Calu3 (cell line): ENCODE measurements at regions of chr11 and their contacts with region 1.

Region 1: GRCh38 chr11:57345555-57346211 is 7.5 kb downstream of the P2RX3 start:
- DNase-seq: peak; percentile 79
- H3K4me3 Mint-ChIP-seq: no peak overlapping the region
- H3K27ac Mint-ChIP-seq: no peak overlapping the region
- H3K4me1 Mint-ChIP-seq: no peaks in the 10 kb centered on the region
- H3K27me3 Mint-ChIP-seq: peaks cover 28% of the 10 kb centered on the region
- CTCF ChIP-seq: peak; percentile 74

Region 2: DNA sequence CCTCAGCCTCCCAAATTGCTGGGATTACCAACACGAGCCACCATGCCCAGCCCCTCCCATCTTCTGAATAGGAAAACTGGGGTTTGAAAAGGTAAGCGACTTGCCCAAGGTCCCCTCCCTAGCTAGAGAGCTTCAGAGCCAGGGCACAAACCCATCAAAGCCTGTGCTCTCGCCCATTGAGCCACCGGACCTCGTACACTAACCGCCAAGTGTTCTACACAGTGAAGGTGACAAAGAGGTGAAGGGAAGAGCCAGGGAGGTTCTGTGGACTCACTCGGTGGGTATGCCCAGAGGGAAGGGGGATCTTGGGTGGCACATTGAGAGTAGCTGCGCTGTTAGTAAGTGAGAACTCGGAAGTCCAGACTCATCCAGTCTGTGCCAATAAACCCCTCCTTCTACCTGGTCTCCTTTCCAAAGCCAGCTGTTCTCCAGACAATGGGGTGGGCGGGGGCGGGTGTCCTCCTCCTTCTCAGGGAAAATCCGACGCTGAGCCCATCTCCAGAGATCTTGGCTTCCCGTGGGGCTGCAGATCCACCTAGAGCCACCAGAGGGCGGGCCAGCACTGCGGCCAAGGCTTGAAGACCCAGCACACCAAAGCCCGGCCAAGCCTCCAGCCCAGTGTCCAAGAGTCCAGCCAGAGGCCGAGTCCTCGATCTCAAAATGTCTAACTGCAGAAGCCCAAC is 111.4 kb after region 1 on chr11:
- CTCF ChIA-PET with region 1: interaction called, 8 read pairs
- intact Hi-C with region 1: loop called (anchors 5 kb)
- DNase-seq: peak; percentile 88
- H3K4me3 Mint-ChIP-seq: peak overlapping the region; percentile 9
- H3K27ac Mint-ChIP-seq: no peak overlapping the region
- H3K4me1 Mint-ChIP-seq: peaks cover 43% of the 10 kb centered on the region
- H3K27me3 Mint-ChIP-seq: peaks cover 42% of the 10 kb centered on the region
- CTCF ChIP-seq: peak; percentile 96

Region 3: GRCh38 chr11:57480409-57481137 is 134.9 kb after region 1 on chr11:
- CTCF ChIA-PET with region 1: interaction called, 8 read pairs
- intact Hi-C with region 1: loop called (anchors 2 kb)
- DNase-seq: peak; percentile 79
- H3K4me3 Mint-ChIP-seq: no peak overlapping the region
- H3K27ac Mint-ChIP-seq: no peak overlapping the region
- H3K4me1 Mint-ChIP-seq: peaks cover 17% of the 10 kb centered on the region
- H3K27me3 Mint-ChIP-seq: peaks cover 14% of the 10 kb centered on the region
- CTCF ChIP-seq: peak; percentile 68

Region 4: GRCh38 chr11:57493507-57494503 is 148.1 kb after region 1 on chr11:
- CTCF ChIA-PET with region 1: interaction called, 10 read pairs
- intact Hi-C with region 1: no loop called
- DNase-seq: peak; percentile 82
- H3K4me3 Mint-ChIP-seq: no peak overlapping the region
- H3K27ac Mint-ChIP-seq: peak overlapping the region; percentile 95
- H3K4me1 Mint-ChIP-seq: peaks cover 35% of the 10 kb centered on the region
- H3K27me3 Mint-ChIP-seq: no peaks in the 10 kb centered on the region
- CTCF ChIP-seq: peak; percentile 94

Region 5: DNA sequence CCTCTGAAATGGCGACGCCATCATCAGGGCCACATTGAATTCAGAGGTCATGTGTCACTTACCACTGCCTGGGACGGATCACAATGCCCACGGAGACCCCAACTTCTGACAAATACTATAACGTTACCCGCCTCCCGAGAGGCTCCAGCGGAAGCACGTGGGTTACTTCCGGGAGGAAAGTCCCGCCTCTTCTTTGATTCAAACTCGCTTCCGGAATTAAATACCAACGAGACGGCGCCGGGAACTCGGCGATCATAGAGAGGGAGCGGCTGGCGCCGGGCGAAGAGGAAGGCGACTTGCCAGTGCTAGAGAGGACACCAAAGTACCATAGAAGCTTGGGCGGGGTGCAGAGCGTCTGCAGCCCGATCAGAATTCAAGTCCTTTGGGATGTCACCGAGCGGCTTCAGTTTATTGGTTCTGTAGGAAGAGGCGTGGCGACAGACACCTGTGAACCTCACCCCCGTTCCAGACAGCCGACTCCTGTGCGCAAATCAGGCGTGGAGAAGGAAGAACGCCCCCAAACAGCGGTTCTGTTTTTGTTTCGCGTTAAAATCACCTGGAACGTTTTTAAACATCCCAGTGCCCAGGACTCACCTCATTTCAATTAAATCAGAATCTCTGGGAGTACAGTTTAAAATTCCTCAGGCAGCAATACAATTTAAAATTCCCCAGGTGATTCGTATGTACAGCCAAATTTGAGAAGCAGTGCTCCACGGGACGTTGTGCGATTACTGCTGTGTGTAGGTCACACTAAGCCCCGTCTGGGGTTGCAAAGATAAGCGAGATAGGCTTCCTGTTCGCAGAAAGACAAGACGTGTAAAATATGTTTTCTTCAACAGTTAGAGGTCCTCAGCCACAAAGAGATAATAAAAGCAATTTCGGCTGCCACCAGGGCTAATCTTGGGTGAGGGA is 185.2 kb after region 1 on chr11 and contains the start of gene TIMM10:
- CTCF ChIA-PET with region 1: interaction called, 7 read pairs
- intact Hi-C with region 1: loop called (anchors 5 kb)
- DNase-seq: peak; percentile 91
- H3K4me3 Mint-ChIP-seq: peak within 1 kb of the TSS; percentile 78
- H3K27ac Mint-ChIP-seq: peak within 1 kb of the TSS; percentile 65
- H3K4me1 Mint-ChIP-seq: peaks cover 12% of the 10 kb centered on the region
- H3K27me3 Mint-ChIP-seq: peaks cover 10% of the 10 kb centered on the region
- CTCF ChIP-seq: no peak
- total RNA-seq, gene TIMM10: 68.5 and 73.5 TPM in 2 replicates

Region 6: GRCh38 chr11:57644748-57645688 is 299.3 kb after region 1 on chr11:
- CTCF ChIA-PET with region 1: interaction called, 31 read pairs
- intact Hi-C with region 1: loop called (anchors 1 kb)
- DNase-seq: peak; percentile 88
- H3K4me3 Mint-ChIP-seq: no peak overlapping the region
- H3K27ac Mint-ChIP-seq: no peak overlapping the region
- H3K4me1 Mint-ChIP-seq: peaks cover 28% of the 10 kb centered on the region
- H3K27me3 Mint-ChIP-seq: peaks cover 66% of the 10 kb centered on the region
- CTCF ChIP-seq: peak; percentile 73

Region 7: GRCh38 chr11:57812634-57813033 is 467.0 kb after region 1 on chr11:
- CTCF ChIA-PET with region 1: no interaction called
- intact Hi-C with region 1: no loop called
- DNase-seq: no peak
- H3K4me3 Mint-ChIP-seq: no peak overlapping the region
- H3K27ac Mint-ChIP-seq: no peak overlapping the region
- H3K4me1 Mint-ChIP-seq: peaks cover 6% of the 10 kb centered on the region
- H3K27me3 Mint-ChIP-seq: no peaks in the 10 kb centered on the region
- CTCF ChIP-seq: no peak

Region 8: DNA sequence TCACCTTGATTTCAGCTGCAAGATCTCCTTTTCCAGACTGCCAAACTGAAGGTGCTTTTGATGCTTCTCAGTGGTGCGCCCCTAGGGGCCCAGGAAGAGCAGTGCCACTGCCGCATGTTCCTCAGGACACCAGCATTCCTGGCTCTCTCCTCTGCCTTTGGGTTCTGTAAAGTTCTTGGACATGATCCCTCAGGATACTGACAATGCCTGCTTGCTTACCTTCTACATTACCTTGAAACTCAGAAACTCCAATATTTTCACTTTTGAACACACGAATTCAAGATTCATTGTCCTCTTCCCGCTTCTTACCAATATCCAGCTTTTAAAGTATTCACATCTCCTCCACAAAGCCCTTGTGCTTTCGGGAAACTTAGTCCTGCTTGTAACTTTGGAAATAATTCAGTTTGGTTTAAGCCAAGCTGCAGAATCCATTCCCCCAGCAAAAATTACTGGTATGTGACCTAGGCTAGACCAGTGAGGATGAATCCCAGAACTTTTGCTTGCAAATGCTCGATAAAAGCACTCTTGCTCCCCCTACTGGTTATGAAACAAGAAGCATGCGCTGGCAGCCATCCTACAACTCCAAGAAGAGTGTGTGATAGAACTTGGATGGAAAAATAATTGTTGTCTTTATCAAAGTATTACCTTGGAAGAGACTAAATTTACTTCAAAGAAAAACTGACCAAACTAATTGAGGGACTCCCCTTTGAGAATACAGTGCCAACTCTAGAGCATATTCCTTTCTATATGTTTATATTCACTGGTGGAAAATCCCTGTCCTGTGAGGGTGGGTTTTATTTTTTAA is 1178.8 kb after region 1 on chr11:
- CTCF ChIA-PET with region 1: no interaction called
- intact Hi-C with region 1: loop called (anchors 5 kb)
- DNase-seq: peak; percentile 72
- H3K4me3 Mint-ChIP-seq: peak overlapping the region; percentile 43
- H3K27ac Mint-ChIP-seq: no peak overlapping the region
- H3K4me1 Mint-ChIP-seq: peaks cover 10% of the 10 kb centered on the region
- H3K27me3 Mint-ChIP-seq: peaks cover 8% of the 10 kb centered on the region
- CTCF ChIP-seq: peak; percentile 89